SK-N-SH (cell line): ENCODE measurements at regions of chr1 and their contacts with region 1.

Region 1: DNA sequence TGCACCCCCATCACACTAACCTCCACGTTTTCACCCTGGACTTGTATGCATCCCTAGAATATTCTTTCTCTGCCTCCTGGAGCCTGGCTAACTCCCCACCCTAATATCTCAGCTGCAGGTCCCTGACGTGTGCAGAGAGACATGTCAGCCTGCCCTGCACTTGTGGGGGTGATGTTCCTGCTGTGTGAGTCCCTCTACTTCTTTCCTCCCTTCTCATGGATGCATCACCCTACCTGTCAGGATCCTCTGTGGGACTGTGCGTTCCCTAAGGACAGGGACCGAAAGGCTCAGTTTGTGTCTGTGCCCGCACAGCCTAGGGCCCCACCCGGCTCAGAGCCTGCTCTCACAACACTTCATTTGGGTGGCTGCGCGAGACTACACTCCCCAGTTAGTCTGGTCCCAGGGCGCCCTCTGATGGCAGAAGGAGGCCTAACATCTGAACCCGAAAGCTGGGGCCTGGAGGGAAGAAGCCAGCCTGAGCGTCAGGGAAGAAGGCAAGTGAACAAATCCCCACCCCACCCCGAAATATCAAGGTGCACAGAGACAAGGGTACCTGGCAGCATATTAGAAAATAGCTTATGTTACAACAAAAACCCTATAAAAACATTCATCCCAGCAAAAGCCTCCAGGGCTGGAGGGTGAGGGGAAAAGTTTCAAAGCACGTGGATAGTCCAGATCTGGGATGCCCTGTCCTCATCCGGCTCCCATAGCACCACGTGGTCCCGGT is 3.7 kb downstream of the CD52 start:
- DNase-seq: peak; percentile 91
- H3K4me3 ChIP-seq: peak overlapping the region in 1 of 2 experiments; percentile 17; a peak in 1 of 4 replicates
- H3K27ac ChIP-seq: no peak overlapping the region
- H3K4me1 ChIP-seq: peaks cover 0 to 3% of the 10 kb centered on the region in 2 experiments; a peak in 1 of 4 replicates
- H3K27me3 ChIP-seq: no peaks in the 10 kb centered on the region
- CTCF ChIP-seq: peak; percentile 88
- EP300 ChIP-seq: no peak
- RAD21 ChIP-seq: peak; percentile 92

Region 2: GRCh38 chr1:26265405-26265804 is 56.1 kb before region 1 on chr1:
- CTCF ChIA-PET with region 1: interaction called, 13 read pairs
- POLR2A ChIA-PET with region 1: no interaction called
- DNase-seq: no peak
- H3K4me3 ChIP-seq: no peak overlapping the region
- H3K27ac ChIP-seq: no peak overlapping the region
- H3K4me1 ChIP-seq: no peaks in the 10 kb centered on the region
- H3K27me3 ChIP-seq: no peaks in the 10 kb centered on the region
- CTCF ChIP-seq: no peak
- EP300 ChIP-seq: no peak
- RAD21 ChIP-seq: no peak

Region 3: GRCh38 chr1:26284597-26285360 is 36.7 kb before region 1 on chr1:
- CTCF ChIA-PET with region 1: interaction called, 213 read pairs
- POLR2A ChIA-PET with region 1: interaction called, 5 read pairs
- DNase-seq: peak; percentile 84
- H3K4me3 ChIP-seq: no peak overlapping the region; a peak in 1 of 4 replicates
- H3K27ac ChIP-seq: peak overlapping the region in 1 of 2 experiments; percentile 50; a peak in 2 of 4 replicates
- H3K4me1 ChIP-seq: peaks cover 28 to 33% of the 10 kb centered on the region in 2 experiments; a peak in 3 of 4 replicates
- H3K27me3 ChIP-seq: no peaks in the 10 kb centered on the region
- CTCF ChIP-seq: peak; percentile 75
- EP300 ChIP-seq: no peak
- RAD21 ChIP-seq: peak; percentile 66

Region 4: GRCh38 chr1:26335774-26336476 is 14.4 kb after region 1 on chr1:
- CTCF ChIA-PET with region 1: interaction called, 38 read pairs
- POLR2A ChIA-PET with region 1: no interaction called
- DNase-seq: no peak
- H3K4me3 ChIP-seq: peak overlapping the region; percentile 61 to 65
- H3K27ac ChIP-seq: no peak overlapping the region
- H3K4me1 ChIP-seq: no peaks in the 10 kb centered on the region; a peak in 1 of 4 replicates
- H3K27me3 ChIP-seq: no peaks in the 10 kb centered on the region
- CTCF ChIP-seq: no peak
- EP300 ChIP-seq: no peak
- RAD21 ChIP-seq: no peak

Region 5: DNA sequence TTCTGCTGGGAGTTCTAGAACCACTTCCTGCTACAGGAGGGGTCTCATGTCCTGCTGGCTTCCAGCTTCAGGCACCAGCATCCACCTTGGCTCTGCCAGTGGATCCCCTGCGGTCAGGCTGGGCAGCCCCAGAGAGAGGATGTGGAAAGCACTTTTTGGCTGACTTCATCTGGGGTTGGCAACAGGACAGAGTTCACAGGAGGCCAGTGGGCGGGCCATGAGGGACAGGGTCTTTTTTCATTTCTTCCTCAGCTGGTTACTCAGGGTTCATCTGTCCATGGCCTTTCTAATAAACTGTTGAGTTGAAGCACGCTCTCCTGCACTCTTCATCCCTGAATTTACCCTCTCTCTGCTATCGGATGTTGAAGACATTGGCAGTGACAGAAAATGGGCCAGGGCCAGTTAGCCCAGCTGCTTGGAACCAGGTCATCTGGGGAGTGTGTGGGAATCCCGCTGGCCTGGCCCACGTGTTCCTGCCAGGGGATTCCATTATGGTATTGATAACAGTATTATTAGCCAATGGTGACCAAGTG is 253.3 kb after region 1 on chr1:
- CTCF ChIA-PET with region 1: no interaction called
- POLR2A ChIA-PET with region 1: no interaction called
- DNase-seq: no peak
- H3K4me3 ChIP-seq: no peak overlapping the region
- H3K27ac ChIP-seq: no peak overlapping the region
- H3K4me1 ChIP-seq: no peaks in the 10 kb centered on the region
- H3K27me3 ChIP-seq: no peaks in the 10 kb centered on the region
- CTCF ChIP-seq: no peak
- EP300 ChIP-seq: no peak
- RAD21 ChIP-seq: no peak